HepG2 (cell line): ENCODE measurements at regions of chrX and their contacts with region 1.

Region 1: GRCh38 chrX:46642145-46642544 is 68.6 kb downstream of the CHST7 start:
- DNase-seq: peak; percentile 11
- ATAC-seq: peak; percentile 72
- H3K4me3 ChIP-seq: no peak overlapping the region
- H3K27ac ChIP-seq: no peak overlapping the region
- H3K4me1 ChIP-seq: no peaks in the 10 kb centered on the region
- H3K27me3 ChIP-seq: no peaks in the 10 kb centered on the region
- CTCF ChIP-seq: no peak
- EP300 ChIP-seq: no peak
- POLR2A ChIP-seq: no peak
- RAD21 ChIP-seq: no peak

Region 2: GRCh38 chrX:46573331-46573891 is 68.7 kb before region 1 on chrX and contains the start of gene CHST7:
- CTCF ChIA-PET with region 1: no interaction called
- POLR2A ChIA-PET with region 1: no interaction called
- in situ Hi-C with region 1: no loop called
- intact Hi-C with region 1: loop called (anchors 5 kb)
- DNase-seq: peak; percentile 54
- ATAC-seq: peak; percentile 88
- H3K4me3 ChIP-seq: peak within 1 kb of the TSS; percentile 63 to 80 (median 74); a peak in 5 of 6 replicates
- H3K27ac ChIP-seq: peak within 1 kb of the TSS; percentile 71
- H3K4me1 ChIP-seq: peaks cover 42% of the 10 kb centered on the region
- H3K27me3 ChIP-seq: no peaks in the 10 kb centered on the region
- CTCF ChIP-seq: peak; percentile 62
- EP300 ChIP-seq: no peak
- POLR2A ChIP-seq: no peak; a peak in 1 of 4 replicates
- RAD21 ChIP-seq: no peak
- total RNA-seq, gene CHST7: 2.6 and 5.2 TPM in 2 replicates